ENCODE measurements at regions of chr1 and their contacts with region 1.

Region 1: DNA sequence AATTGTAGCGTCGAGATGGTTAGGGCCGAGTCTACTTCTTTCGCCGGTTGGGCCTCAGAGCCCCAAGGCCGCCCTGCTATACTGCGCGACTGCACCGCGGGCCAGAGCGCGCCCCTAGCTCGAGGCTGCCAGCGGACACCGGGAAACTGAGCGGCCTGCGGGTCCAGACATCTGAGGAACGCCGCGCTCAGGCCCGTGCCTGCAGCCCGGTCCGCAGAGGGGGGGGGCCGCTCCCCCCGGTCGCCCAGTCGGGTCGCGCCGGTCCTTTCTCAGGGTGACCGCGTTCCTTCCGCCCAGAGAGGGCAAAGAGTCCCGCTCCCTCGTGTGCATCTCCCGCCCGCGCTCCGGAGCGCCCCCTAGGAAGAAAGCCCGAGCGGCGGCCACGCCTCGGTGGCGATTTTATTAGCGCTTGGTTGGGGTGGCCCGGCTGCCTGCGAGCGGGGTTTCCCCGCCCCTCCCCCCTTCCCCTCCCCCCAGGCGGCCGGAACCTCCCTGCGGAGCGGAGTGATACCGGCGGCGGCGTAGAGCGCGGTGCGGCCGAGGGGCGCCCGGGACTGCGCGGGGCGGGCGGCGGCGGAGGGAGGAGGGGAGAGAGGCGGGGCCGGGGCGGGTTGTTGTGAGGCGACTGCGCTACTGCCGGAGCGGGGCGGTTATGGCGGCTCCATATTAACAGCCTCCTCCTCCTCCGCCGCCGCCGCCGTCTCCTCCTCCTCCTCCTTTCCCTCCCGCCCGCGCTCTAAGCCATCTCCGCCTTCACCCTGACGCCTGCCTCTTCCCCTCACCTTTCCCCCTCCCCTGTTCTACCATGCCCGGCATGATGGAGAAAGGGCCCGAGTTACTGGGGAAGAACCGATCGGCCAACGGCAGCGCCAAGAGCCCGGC is at the start of gene RCOR3:
- DNase-seq: peak; percentile 81 to 92 (median 88)
- ATAC-seq: peak; percentile 89
- H3K4me3 ChIP-seq: peak within 1 kb of the TSS; percentile 87
- H3K4me3 Mint-ChIP-seq: peak within 1 kb of the TSS; percentile 86 to 97 (median 92)
- H3K27ac ChIP-seq: peak within 1 kb of the TSS; percentile 89
- H3K27ac Mint-ChIP-seq: peak within 1 kb of the TSS; percentile 90 to 99 (median 93)
- H3K4me1 ChIP-seq: peaks cover 6 to 17% of the 10 kb centered on the region in 2 donors
- H3K4me1 Mint-ChIP-seq: peaks cover 17 to 33% (median 23%) of the 10 kb centered on the region in 7 donors
- H3K27me3 ChIP-seq: no peaks in the 10 kb centered on the region
- H3K27me3 Mint-ChIP-seq: no peaks in the 10 kb centered on the region
- total RNA-seq, gene RCOR3: 42.3 to 98.0 (median 82.8) TPM

Region 2: DNA sequence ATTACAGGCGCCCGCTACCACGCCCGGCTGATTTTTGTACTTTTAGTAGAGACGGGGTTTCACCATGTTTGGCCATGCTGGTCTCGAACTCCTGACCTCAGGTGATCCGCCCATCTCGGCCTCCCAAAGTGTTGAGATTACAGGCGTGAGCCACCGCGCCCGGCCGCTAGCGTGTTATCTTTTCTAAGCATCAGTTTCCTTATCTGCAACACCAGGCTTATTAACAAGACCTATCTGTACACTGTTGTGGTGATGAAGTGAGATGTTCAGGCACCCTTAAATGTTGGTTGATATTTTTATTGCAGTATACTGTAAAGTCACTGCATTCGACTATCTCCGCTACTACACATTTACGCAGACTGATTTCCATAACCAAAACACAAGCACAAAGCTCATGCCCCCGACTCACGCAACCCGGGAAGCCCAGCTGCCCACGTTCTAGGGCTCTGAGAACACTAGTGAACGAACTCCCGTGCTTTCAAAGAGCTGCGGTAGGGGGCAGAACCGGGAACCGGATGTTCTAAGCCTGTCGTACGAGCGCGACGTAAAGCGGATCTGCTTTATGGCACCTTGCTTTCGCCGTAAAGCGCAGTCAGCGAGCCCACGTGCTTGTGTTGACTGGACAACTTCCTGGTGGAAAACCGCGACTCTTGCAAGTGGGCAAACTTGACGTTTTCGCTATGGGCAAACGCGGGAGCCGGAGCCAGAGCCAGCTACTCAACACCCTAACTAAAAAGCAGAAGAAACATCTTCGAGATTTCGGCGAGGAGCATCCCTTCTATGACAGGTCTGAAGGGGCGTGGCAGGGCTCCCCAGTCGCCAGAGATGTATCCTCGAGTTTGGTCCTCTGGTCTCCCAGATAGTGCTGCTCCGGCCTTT is 1431.4 kb before region 1 on chr1 and contains the start of gene UTP25:
- CTCF ChIA-PET with region 1: no interaction called
- POLR2A ChIA-PET with region 1: no interaction called
- intact Hi-C with region 1: loop called in 1 of 2 experiments (anchors 1 kb)
- DNase-seq: peak; percentile 68 to 94 (median 91)
- ATAC-seq: peak; percentile 97
- H3K4me3 ChIP-seq: peak within 1 kb of the TSS; percentile 98
- H3K4me3 Mint-ChIP-seq: peak within 1 kb of the TSS; percentile 77 to 97 (median 92)
- H3K27ac ChIP-seq: peak within 1 kb of the TSS; percentile 84
- H3K27ac Mint-ChIP-seq: peak within 1 kb of the TSS; percentile 74 to 96 (median 89)
- H3K4me1 ChIP-seq: peaks cover 8 to 16% of the 10 kb centered on the region in 2 donors
- H3K4me1 Mint-ChIP-seq: peaks cover 24 to 58% (median 49%) of the 10 kb centered on the region in 7 donors
- H3K27me3 ChIP-seq: no peaks in the 10 kb centered on the region
- H3K27me3 Mint-ChIP-seq: peaks cover 0 to 12% (median 5%) of the 10 kb centered on the region in 5 donors
- total RNA-seq, gene UTP25: 6.0 to 16.3 (median 12.7) TPM

Region 3: GRCh38 chr1:211017075-211017748 is 241.8 kb before region 1 on chr1:
- CTCF ChIA-PET with region 1: no interaction called
- POLR2A ChIA-PET with region 1: no interaction called
- intact Hi-C with region 1: no loop called
- DNase-seq: no peak
- ATAC-seq: no peak
- H3K4me3 ChIP-seq: no peak overlapping the region
- H3K4me3 Mint-ChIP-seq: no peak overlapping the region
- H3K27ac ChIP-seq: no peak overlapping the region
- H3K27ac Mint-ChIP-seq: no peak overlapping the region
- H3K4me1 ChIP-seq: no peaks in the 10 kb centered on the region
- H3K4me1 Mint-ChIP-seq: no peaks in the 10 kb centered on the region
- H3K27me3 ChIP-seq: peaks cover 0 to 3% of the 10 kb centered on the region in 2 donors
- H3K27me3 Mint-ChIP-seq: peaks cover 0 to 44% (median 34%) of the 10 kb centered on the region in 5 donors

Region 4: DNA sequence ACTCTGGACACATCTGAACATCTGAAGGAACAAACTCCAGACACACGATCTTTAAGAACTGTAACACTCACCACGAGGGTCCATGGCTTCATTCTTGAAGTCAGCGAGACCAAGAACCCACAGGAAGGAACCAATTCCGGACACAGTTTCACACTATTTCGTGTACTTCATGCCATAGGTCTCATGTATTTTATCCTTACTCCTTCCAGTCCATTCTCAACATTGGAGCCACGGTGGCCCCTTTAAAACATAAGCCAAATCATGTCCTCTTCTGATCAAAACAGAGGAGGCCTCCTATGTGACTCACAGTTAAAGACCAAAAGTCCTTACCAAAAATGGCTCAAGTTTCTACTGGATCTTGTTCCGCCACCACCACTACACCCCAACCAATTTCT is 29.6 kb before region 1 on chr1:
- CTCF ChIA-PET with region 1: interaction called, 3 read pairs
- POLR2A ChIA-PET with region 1: interaction called, 13 read pairs
- intact Hi-C with region 1: loop called (anchors 1 kb)
- DNase-seq: no peak
- ATAC-seq: peak; percentile 54
- H3K4me3 ChIP-seq: no peak overlapping the region
- H3K4me3 Mint-ChIP-seq: peak overlapping the region; percentile 43 to 82 (median 74)
- H3K27ac ChIP-seq: peak overlapping the region; percentile 38
- H3K27ac Mint-ChIP-seq: peak overlapping the region; percentile 67 to 90 (median 82)
- H3K4me1 ChIP-seq: peaks cover 13 to 17% of the 10 kb centered on the region in 2 donors
- H3K4me1 Mint-ChIP-seq: peaks cover 15 to 41% (median 30%) of the 10 kb centered on the region in 7 donors
- H3K27me3 ChIP-seq: no peaks in the 10 kb centered on the region
- H3K27me3 Mint-ChIP-seq: peaks cover 0 to 8% (median 0%) of the 10 kb centered on the region in 5 donors

Region 5: DNA sequence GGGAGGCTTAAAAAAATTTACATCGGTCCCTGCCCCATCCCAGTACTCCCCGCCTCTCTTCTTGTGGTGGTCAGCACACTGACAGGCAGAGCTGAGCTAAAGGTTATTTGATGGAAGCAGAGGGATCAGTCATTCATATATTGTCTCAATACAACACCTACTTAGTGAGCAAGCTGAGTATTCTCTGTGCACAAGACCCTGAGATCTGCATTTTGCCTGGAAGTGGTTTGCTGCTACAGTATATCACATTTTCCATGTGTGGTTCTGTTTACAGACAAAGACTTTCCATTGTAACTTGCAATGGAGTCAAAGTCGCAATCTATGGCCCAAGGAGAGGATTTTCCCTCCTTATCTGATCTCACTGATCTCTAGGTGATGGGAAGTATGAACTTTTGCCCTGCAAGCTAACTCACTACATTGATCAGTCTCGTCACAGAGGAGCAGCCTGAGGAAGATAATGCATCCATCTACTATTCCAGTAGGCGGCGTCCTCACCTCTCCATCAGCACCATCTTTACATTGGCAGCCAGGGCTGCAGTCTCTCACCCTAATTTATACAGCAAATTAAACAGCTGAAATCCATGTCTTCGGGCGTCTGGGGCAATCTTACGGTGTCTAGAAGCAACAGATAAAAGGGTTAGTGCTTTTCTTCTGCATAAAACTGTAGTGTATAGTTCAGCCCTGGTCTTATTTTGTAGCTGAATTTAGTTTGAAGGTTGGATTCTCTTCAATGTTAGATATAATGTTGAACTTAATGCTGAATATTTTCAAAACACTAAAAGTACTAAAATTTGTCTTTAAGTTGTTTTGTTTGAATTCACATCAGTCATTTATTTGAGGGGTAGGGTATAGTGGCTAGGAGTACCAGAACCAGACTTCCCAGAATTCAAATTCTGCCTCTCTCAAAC is 64.4 kb after region 1 on chr1:
- CTCF ChIA-PET with region 1: interaction called, 4 read pairs
- POLR2A ChIA-PET with region 1: no interaction called
- intact Hi-C with region 1: loop called (anchors 1 to 2 kb)
- DNase-seq: peak in 8 of 9 donors; percentile 55 to 75 (median 68)
- ATAC-seq: peak; percentile 84
- H3K4me3 ChIP-seq: no peak overlapping the region
- H3K4me3 Mint-ChIP-seq: no peak overlapping the region
- H3K27ac ChIP-seq: no peak overlapping the region
- H3K27ac Mint-ChIP-seq: no peak overlapping the region
- H3K4me1 ChIP-seq: peaks cover 7 to 20% of the 10 kb centered on the region in 2 donors
- H3K4me1 Mint-ChIP-seq: peaks cover 20 to 41% (median 35%) of the 10 kb centered on the region in 7 donors
- H3K27me3 ChIP-seq: no peaks in the 10 kb centered on the region
- H3K27me3 Mint-ChIP-seq: no peaks in the 10 kb centered on the region

Region 6: GRCh38 chr1:211591980-211592493 is 333.0 kb after region 1 on chr1:
- CTCF ChIA-PET with region 1: no interaction called
- POLR2A ChIA-PET with region 1: no interaction called
- intact Hi-C with region 1: no loop called
- DNase-seq: no peak
- ATAC-seq: no peak
- H3K4me3 ChIP-seq: no peak overlapping the region
- H3K4me3 Mint-ChIP-seq: no peak overlapping the region
- H3K27ac ChIP-seq: no peak overlapping the region
- H3K27ac Mint-ChIP-seq: peak overlapping the region in 1 of 9 donors; percentile 27
- H3K4me1 ChIP-seq: no peaks in the 10 kb centered on the region
- H3K4me1 Mint-ChIP-seq: peaks cover 0 to 6% (median 0%) of the 10 kb centered on the region in 7 donors
- H3K27me3 ChIP-seq: no peaks in the 10 kb centered on the region
- H3K27me3 Mint-ChIP-seq: peaks cover 0 to 34% (median 3%) of the 10 kb centered on the region in 5 donors

Region 7: GRCh38 chr1:211675230-211676105 is 416.5 kb after region 1 on chr1 and contains the start of gene NEK2:
- CTCF ChIA-PET with region 1: no interaction called
- POLR2A ChIA-PET with region 1: no interaction called
- intact Hi-C with region 1: loop called in 1 of 2 experiments (anchors 1 kb)
- DNase-seq: peak; percentile 53 to 90 (median 85)
- ATAC-seq: peak; percentile 97
- H3K4me3 ChIP-seq: peak within 1 kb of the TSS; percentile 76
- H3K4me3 Mint-ChIP-seq: peak within 1 kb of the TSS; percentile 88 to 96 (median 92)
- H3K27ac ChIP-seq: peak within 1 kb of the TSS; percentile 56
- H3K27ac Mint-ChIP-seq: peak within 1 kb of the TSS; percentile 45 to 88 (median 80)
- H3K4me1 ChIP-seq: peaks cover 5 to 7% of the 10 kb centered on the region in 2 donors
- H3K4me1 Mint-ChIP-seq: peaks cover 8 to 38% (median 13%) of the 10 kb centered on the region in 7 donors
- H3K27me3 ChIP-seq: no peaks in the 10 kb centered on the region
- H3K27me3 Mint-ChIP-seq: no peaks in the 10 kb centered on the region
- total RNA-seq, gene NEK2: 0.16 to 26.5 (median 0.25) TPM in 4 of 5 experiments, not detected in the other

Region 8: GRCh38 chr1:212608209-212608955 is 1349.4 kb after region 1 on chr1 and contains the start of gene ATF3:
- CTCF ChIA-PET with region 1: no interaction called
- POLR2A ChIA-PET with region 1: no interaction called
- intact Hi-C with region 1: loop called in 1 of 2 experiments (anchors 2 kb)
- DNase-seq: peak; percentile 27 to 90 (median 47)
- ATAC-seq: peak; percentile 87
- H3K4me3 ChIP-seq: peak within 1 kb of the TSS; percentile 70
- H3K4me3 Mint-ChIP-seq: peak within 1 kb of the TSS; percentile 90 to 98 (median 95)
- H3K27ac ChIP-seq: no peak within 1 kb of the TSS
- H3K27ac Mint-ChIP-seq: peak within 1 kb of the TSS; percentile 40 to 98 (median 76)
- H3K4me1 ChIP-seq: peaks cover 17 to 23% of the 10 kb centered on the region in 2 donors
- H3K4me1 Mint-ChIP-seq: peaks cover 17 to 55% (median 21%) of the 10 kb centered on the region in 7 donors
- H3K27me3 ChIP-seq: peaks cover 17 to 26% of the 10 kb centered on the region in 2 donors
- H3K27me3 Mint-ChIP-seq: peaks cover 47 to 66% (median 58%) of the 10 kb centered on the region in 5 donors
- total RNA-seq, gene ATF3: 0.57 to 83.4 (median 12.5) TPM

Region 9: DNA sequence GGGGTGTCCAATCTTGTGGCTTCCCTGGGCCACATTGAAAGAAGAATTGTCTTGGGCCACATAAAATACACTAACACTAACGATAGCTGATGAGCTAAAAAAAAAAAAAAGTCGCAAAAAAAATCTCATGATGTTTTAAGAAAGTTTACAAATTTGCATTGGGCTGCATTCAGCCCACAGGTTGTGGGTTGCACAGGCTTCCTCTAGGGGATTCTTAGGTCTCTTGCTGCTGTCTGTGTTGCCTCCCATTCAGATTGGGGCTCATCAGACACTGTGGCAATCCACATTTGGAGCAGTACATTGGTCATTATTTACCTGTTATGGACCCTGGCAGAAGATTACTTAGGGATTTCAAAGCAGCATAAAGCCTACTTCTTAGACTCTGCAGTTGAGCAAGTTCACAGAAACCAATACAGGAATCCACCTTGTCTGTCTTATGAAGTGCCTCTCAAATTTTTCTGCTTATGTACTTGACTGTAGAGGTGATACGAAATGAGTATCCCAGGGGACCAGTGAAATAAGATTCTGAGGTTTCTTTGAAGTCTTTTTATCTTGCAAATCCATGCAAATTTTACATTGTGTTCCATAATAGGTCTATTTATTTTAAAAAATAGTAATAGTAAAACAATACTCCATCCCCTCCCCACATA is 1997.6 kb after region 1 on chr1:
- CTCF ChIA-PET with region 1: no interaction called
- POLR2A ChIA-PET with region 1: no interaction called
- intact Hi-C with region 1: no loop called
- DNase-seq: no peak
- ATAC-seq: no peak
- H3K4me3 ChIP-seq: no peak overlapping the region
- H3K4me3 Mint-ChIP-seq: no peak overlapping the region
- H3K27ac ChIP-seq: no peak overlapping the region
- H3K27ac Mint-ChIP-seq: no peak overlapping the region
- H3K4me1 ChIP-seq: no peaks in the 10 kb centered on the region
- H3K4me1 Mint-ChIP-seq: peaks cover 0 to 2% (median 0%) of the 10 kb centered on the region in 7 donors
- H3K27me3 ChIP-seq: no peaks in the 10 kb centered on the region
- H3K27me3 Mint-ChIP-seq: no peaks in the 10 kb centered on the region

Measured in naive thymus-derived CD4-positive, alpha-beta T cell (primary cell).